ENCODE measurements at regions of chr7 and their contacts with region 1.

Region 1: GRCh38 chr7:30412810-30413504 is 65.6 kb downstream of the NOD1 start:
- DNase-seq: peak; percentile 49 to 56
- H3K4me3 ChIP-seq: no peak overlapping the region
- H3K27ac ChIP-seq: peak overlapping the region in 2 of 3 donors; percentile 1 to 33
- H3K4me1 ChIP-seq: peaks cover 0 to 4% of the 10 kb centered on the region in 2 donors
- H3K27me3 ChIP-seq: no peaks in the 10 kb centered on the region
- CTCF ChIP-seq: peak in 4 of 6 experiments; percentile 48 to 87 (median 72)
- POLR2A ChIP-seq: no peak

Region 2: DNA sequence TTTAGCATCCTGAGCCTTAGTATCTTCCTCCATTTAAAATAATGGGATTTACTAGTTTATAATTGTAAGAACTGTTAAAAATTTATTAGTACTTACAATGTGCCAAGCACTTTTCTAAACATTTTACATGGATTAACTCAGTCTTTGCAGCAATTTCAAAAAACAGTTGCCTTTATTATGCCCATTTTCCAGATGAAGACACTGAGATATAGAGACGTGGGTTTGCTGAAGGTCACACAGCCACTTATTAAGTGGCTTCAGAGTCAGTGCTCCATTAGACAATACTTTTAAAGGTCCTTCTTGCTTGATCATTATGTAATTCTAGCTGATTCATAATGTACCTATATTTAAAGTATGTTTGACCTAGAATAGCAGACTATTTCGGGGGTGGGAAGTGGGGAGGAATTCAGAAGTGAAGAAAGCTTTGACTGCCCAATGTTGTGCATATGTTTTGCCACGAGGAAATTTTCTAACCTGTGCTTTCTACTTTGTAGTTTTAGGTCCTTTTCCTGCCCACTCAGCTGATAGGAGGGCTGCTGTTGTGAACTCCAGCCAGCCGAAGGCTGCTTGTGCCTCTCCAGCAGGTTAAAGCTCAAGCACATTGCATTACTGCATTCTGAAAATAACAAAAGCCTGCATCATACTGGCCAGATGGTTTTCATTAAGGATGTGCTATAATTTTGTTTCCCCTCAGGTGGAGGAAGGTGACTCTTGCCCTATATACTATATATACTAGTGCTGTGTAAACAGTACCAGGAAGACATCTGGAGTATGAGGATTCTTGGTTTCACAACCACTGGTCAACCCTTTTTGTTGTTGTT is 380.4 kb before region 1 on chr7:
- intact Hi-C with region 1: no loop called
- DNase-seq: peak; percentile 51 to 56
- H3K4me3 ChIP-seq: no peak overlapping the region
- H3K27ac ChIP-seq: no peak overlapping the region
- H3K4me1 ChIP-seq: peaks cover 10 to 18% of the 10 kb centered on the region in 2 donors
- H3K27me3 ChIP-seq: no peaks in the 10 kb centered on the region
- CTCF ChIP-seq: no peak
- POLR2A ChIP-seq: no peak

Region 3: GRCh38 chr7:30173058-30173897 is 239.7 kb before region 1 on chr7:
- intact Hi-C with region 1: loop called (anchors 5 kb)
- DNase-seq: peak in 1 of 2 donors; percentile 25
- H3K4me3 ChIP-seq: no peak overlapping the region
- H3K27ac ChIP-seq: peak overlapping the region in 2 of 3 donors; percentile 8 to 41
- H3K4me1 ChIP-seq: peaks cover 5 to 26% of the 10 kb centered on the region in 2 donors
- H3K27me3 ChIP-seq: no peaks in the 10 kb centered on the region
- CTCF ChIP-seq: no peak
- POLR2A ChIP-seq: no peak

Measured in thyroid gland (tissue), 4 donors.